ENCODE measurements at regions of chr16 and their contacts with region 1.

Region 1: GRCh38 chr16:28930652-28931051 is 1.1 kb upstream of the CD19 start:
- DNase-seq: no peak
- H3K4me3 ChIP-seq: no peak overlapping the region
- H3K27ac ChIP-seq: no peak overlapping the region
- H3K4me1 ChIP-seq: peaks cover 0 to 3% of the 10 kb centered on the region in 2 donors
- H3K27me3 ChIP-seq: no peaks in the 10 kb centered on the region
- CTCF ChIP-seq: no peak
- POLR2A ChIP-seq: no peak

Region 2: DNA sequence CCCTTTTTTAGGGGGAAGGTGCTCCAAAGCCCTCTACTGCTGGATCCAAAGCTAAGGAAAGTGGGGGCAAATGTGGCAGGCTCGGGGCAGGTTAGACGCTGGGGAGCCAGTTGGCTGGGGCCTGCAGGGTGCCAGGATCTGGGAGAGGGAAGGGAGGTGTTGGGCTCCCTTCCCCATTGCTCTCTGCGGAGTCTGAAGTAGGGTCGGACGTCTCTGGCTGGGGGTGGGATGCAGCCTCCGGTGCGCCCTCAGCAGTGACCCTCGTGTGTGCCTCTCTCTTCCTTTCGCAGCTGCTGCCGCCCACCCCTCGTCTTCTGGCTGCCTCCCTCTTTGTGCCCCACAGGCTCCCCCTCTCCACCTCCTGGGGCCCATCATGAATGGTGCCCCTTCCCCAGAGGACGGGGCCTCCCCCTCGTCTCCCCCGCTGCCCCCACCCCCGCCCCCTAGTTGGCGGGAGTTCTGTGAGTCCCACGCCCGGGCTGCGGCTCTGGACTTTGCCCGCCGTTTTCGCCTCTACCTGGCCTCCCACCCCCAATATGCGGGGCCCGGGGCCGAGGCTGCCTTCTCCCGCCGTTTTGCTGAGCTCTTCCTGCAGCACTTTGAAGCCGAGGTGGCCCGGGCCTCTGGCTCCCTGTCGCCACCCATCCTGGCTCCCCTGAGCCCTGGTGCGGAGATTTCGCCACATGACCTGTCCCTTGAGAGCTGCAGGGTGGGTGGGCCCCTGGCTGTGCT is 64.8 kb before region 1 on chr16:
- intact Hi-C with region 1: loop called in 1 of 2 experiments (anchors 5 kb)
- DNase-seq: no peak
- H3K4me3 ChIP-seq: no peak overlapping the region
- H3K27ac ChIP-seq: no peak overlapping the region
- H3K4me1 ChIP-seq: peaks cover 12 to 18% of the 10 kb centered on the region in 2 donors
- H3K27me3 ChIP-seq: no peaks in the 10 kb centered on the region
- CTCF ChIP-seq: no peak
- POLR2A ChIP-seq: no peak

Measured in adrenal gland (tissue), 19 donors.